ENCODE measurements at regions of chr7 and their contacts with region 1.

Region 1: GRCh38 chr7:104883718-104884452 is 130.1 kb upstream of the KMT2E start:
- DNase-seq: peak; percentile 83
- ATAC-seq: peak; percentile 90
- H3K4me3 Mint-ChIP-seq: no peak overlapping the region
- H3K27ac Mint-ChIP-seq: peak overlapping the region; percentile 3
- H3K4me1 Mint-ChIP-seq: peaks cover 5% of the 10 kb centered on the region
- H3K27me3 Mint-ChIP-seq: peaks cover 2% of the 10 kb centered on the region
- CTCF ChIP-seq: peak; percentile 95

Region 2: GRCh38 chr7:104855861-104856260 is 28.0 kb before region 1 on chr7:
- CTCF ChIA-PET with region 1: interaction called, 23 read pairs
- POLR2A ChIA-PET with region 1: no interaction called
- intact Hi-C with region 1: no loop called
- DNase-seq: no peak
- ATAC-seq: no peak
- H3K4me3 Mint-ChIP-seq: no peak overlapping the region
- H3K27ac Mint-ChIP-seq: no peak overlapping the region
- H3K4me1 Mint-ChIP-seq: peaks cover 18% of the 10 kb centered on the region
- H3K27me3 Mint-ChIP-seq: no peaks in the 10 kb centered on the region
- CTCF ChIP-seq: no peak

Region 3: GRCh38 chr7:104873346-104873849 is 10.5 kb before region 1 on chr7:
- CTCF ChIA-PET with region 1: interaction called, 15 read pairs
- POLR2A ChIA-PET with region 1: no interaction called
- intact Hi-C with region 1: no loop called
- DNase-seq: no peak
- ATAC-seq: no peak
- H3K4me3 Mint-ChIP-seq: no peak overlapping the region
- H3K27ac Mint-ChIP-seq: no peak overlapping the region
- H3K4me1 Mint-ChIP-seq: peaks cover 2% of the 10 kb centered on the region
- H3K27me3 Mint-ChIP-seq: peaks cover 1% of the 10 kb centered on the region
- CTCF ChIP-seq: no peak

Region 4: GRCh38 chr7:104900525-104901239 is 16.8 kb after region 1 on chr7:
- CTCF ChIA-PET with region 1: interaction called, 41 read pairs
- POLR2A ChIA-PET with region 1: interaction called, 3 read pairs
- intact Hi-C with region 1: no loop called
- DNase-seq: no peak
- ATAC-seq: no peak
- H3K4me3 Mint-ChIP-seq: no peak overlapping the region
- H3K27ac Mint-ChIP-seq: no peak overlapping the region
- H3K4me1 Mint-ChIP-seq: peaks cover 6% of the 10 kb centered on the region
- H3K27me3 Mint-ChIP-seq: peaks cover 4% of the 10 kb centered on the region
- CTCF ChIP-seq: no peak

Region 5: GRCh38 chr7:104914421-104914820 is 30.5 kb after region 1 on chr7:
- CTCF ChIA-PET with region 1: interaction called, 162 read pairs
- POLR2A ChIA-PET with region 1: no interaction called
- intact Hi-C with region 1: loop called (anchors 1 kb)
- DNase-seq: no peak
- ATAC-seq: no peak
- H3K4me3 Mint-ChIP-seq: no peak overlapping the region
- H3K27ac Mint-ChIP-seq: no peak overlapping the region
- H3K4me1 Mint-ChIP-seq: no peaks in the 10 kb centered on the region
- H3K27me3 Mint-ChIP-seq: no peaks in the 10 kb centered on the region
- CTCF ChIP-seq: no peak

Region 6: GRCh38 chr7:105149827-105150226 is 265.9 kb after region 1 on chr7:
- CTCF ChIA-PET with region 1: no interaction called
- POLR2A ChIA-PET with region 1: no interaction called
- intact Hi-C with region 1: no loop called
- DNase-seq: no peak
- ATAC-seq: peak; percentile 45
- H3K4me3 Mint-ChIP-seq: no peak overlapping the region
- H3K27ac Mint-ChIP-seq: no peak overlapping the region
- H3K4me1 Mint-ChIP-seq: peaks cover 17% of the 10 kb centered on the region
- H3K27me3 Mint-ChIP-seq: no peaks in the 10 kb centered on the region
- CTCF ChIP-seq: no peak